ENCODE measurements at regions of chr3 and their contacts with region 1.

Region 1: GRCh38 chr3:27533718-27534573 is 49.8 kb upstream of the SLC4A7 start:
- DNase-seq: peak; percentile 25
- H3K4me3 Mint-ChIP-seq: no peak overlapping the region
- H3K27ac Mint-ChIP-seq: peak overlapping the region; percentile 48
- H3K4me1 Mint-ChIP-seq: peaks cover 15% of the 10 kb centered on the region
- H3K27me3 Mint-ChIP-seq: no peaks in the 10 kb centered on the region

Region 2: DNA sequence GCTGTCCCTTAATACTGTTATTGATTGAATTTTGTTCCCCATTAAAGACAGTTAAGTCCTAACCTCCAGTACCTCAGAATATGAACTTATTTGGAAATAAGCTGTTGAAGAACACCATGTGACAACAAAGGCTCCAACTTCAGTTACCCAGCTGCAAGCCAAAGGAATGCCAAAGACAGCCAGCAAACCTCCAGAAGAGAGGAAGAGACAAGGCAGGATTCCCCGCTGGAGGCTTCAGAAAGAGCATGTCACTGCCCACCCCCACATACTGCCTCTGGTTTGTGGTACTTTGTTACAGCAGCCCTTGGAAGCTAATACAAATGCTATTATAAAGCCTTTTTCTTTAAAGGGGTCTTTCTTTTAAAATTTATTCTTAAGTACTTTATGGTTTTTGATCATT is 146.3 kb before region 1 on chr3:
- CTCF ChIA-PET with region 1: no interaction called
- intact Hi-C with region 1: no loop called
- DNase-seq: no peak
- H3K4me3 Mint-ChIP-seq: no peak overlapping the region
- H3K27ac Mint-ChIP-seq: no peak overlapping the region
- H3K4me1 Mint-ChIP-seq: no peaks in the 10 kb centered on the region
- H3K27me3 Mint-ChIP-seq: no peaks in the 10 kb centered on the region

Region 3: DNA sequence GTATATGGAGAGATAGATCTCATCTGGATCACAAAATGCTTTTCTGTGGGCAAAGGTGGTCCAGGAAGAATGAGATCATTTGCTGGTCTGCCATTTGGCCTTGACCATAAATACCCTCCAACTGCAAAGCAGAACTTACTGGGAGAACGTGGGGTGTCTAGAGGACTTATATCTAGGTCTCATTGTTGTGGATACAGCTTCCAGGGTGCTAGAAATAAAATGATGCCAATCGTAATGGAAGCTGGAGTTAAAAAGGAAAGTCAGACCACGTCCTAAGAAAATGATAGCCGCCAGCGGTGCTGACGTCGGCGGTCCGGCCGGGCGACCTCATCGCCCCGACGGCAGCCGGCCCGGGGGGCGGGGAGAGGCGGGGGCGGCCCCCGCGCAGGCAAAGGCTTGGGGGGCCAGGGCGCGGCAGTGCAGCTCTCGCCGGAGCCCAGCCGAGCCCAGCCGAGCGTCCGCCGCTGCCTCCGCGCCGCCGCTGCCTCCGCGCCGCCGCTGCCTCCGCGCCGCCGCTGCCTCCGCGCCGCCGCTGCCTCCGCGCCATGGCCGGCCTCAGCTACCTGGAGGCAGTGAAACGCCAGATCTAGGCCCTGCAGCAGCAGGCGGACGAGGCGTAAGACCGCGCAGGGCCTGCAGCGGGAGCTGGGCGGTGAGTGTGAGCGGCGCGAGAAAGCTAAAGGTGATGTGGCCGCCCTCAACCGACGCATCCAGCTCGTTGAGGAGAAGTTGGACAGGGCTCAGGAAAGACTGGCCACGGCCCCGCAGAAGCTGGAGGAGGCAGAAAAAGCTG is 98.7 kb after region 1 on chr3:
- CTCF ChIA-PET with region 1: no interaction called
- intact Hi-C with region 1: loop called (anchors 5 kb)
- DNase-seq: peak; percentile 42
- H3K4me3 Mint-ChIP-seq: peak overlapping the region; percentile 80
- H3K27ac Mint-ChIP-seq: peak overlapping the region; percentile 22
- H3K4me1 Mint-ChIP-seq: peaks cover 17% of the 10 kb centered on the region
- H3K27me3 Mint-ChIP-seq: no peaks in the 10 kb centered on the region

Measured in activated naive CD4-positive, alpha-beta T cell treated with anti-CD3 and anti-CD28 coated beads for 36 hours (primary cell).